Activated T-helper 1 cell treated with anti-CD3 and anti-CD28 coated beads, Interleukin-12 subunit alpha, Interleukin-12 subunit beta, Interleukin-2, Interleukin-4 antibody, amounts not matched to agents 30 ng/mL and 10 ng/mL and 1 ng/mL, durations not matched to agents 14 hours and 24 hours and 36 hours (primary cell): ENCODE measurements at regions of chr3 and their contacts with region 1.

Region 1: GRCh38 chr3:46098319-46098761 is 71.1 kb upstream of the XCR1 start:
- DNase-seq: peak; percentile 70
- H3K4me3 Mint-ChIP-seq: peak overlapping the region; percentile 71
- H3K27ac Mint-ChIP-seq: peak overlapping the region; percentile 95
- H3K4me1 Mint-ChIP-seq: peaks cover 75% of the 10 kb centered on the region
- H3K27me3 Mint-ChIP-seq: peaks cover 5% of the 10 kb centered on the region

Region 2: GRCh38 chr3:46027736-46028397 is 70.5 kb before region 1 on chr3:
- intact Hi-C with region 1: no loop called
- DNase-seq: no peak
- H3K4me3 Mint-ChIP-seq: no peak overlapping the region
- H3K27ac Mint-ChIP-seq: no peak overlapping the region
- H3K4me1 Mint-ChIP-seq: no peaks in the 10 kb centered on the region
- H3K27me3 Mint-ChIP-seq: peaks cover 16% of the 10 kb centered on the region

Region 3: DNA sequence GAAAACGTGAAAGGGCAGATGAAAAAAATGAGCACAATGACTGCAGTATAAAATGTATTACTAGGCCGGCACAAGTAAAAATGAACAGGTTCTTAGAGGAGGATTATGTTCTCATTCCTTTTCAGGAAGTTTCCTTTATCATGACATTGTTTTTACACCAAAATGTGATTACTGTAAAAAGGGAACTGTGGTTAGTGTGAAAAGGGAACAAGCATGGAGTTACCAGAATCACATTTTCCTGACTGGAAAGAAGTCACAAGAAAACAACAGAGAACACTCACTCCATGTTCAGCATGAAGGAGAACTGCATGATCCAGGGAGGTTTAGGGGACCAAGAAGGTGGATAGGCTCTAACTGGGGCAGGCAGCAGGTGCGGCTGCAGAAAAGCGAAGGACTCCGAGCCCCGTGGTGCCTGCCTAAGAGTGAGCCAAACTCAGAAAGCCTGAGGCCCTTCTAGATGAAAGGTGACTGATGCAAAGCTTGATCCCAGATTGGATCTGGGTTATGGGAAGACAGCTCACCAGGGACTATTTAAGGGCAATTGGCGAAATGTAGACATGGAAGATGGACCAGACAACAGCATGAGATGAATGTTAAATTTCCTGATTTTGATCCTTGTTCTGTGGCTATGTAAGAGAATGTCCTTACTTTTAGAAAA is 32.4 kb after region 1 on chr3:
- intact Hi-C with region 1: loop called (anchors 2 kb)
- DNase-seq: no peak
- H3K4me3 Mint-ChIP-seq: no peak overlapping the region
- H3K27ac Mint-ChIP-seq: no peak overlapping the region
- H3K4me1 Mint-ChIP-seq: peaks cover 61% of the 10 kb centered on the region
- H3K27me3 Mint-ChIP-seq: peaks cover 3% of the 10 kb centered on the region

Region 4: DNA sequence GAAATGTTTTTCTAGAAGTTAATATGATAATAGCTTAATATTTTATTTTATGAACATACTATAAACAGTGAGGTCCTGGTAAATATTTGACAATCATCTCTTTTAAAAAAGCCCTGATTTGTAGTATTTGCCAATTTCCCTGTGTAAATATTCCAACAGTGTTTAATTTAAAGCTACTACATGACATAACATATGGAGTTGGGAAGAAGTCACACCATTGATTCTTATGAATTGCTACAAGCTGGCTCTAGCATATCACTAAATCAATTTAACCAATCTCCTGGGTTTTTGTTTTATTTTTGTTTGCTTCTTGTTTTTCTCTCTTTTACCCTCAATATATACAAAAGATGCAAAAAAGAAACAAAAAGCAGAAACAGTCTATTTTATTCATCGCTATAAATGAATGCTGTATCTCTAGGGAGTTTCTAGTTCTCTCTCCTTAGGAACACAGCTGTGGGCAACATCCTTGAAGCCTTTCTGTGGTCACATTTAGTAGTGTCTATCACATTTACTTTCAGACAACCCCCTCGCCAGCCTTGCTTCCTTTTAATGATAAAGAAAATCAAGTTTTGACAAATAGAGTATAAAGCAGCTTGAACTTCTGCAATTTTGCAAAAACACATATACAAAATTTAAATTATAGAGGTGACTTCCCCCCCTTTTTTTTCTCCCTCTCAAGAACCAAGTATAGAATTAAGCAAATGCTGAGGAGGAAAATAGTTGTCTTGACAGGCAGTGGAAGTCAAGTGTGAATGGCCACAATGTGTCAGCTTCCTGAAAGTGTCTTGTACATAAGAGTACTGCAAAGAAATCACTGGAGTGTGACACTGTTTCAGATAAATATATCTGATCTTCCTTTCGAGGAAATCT is 88.4 kb after region 1 on chr3:
- intact Hi-C with region 1: loop called (anchors 2 kb)
- DNase-seq: no peak
- H3K4me3 Mint-ChIP-seq: no peak overlapping the region
- H3K27ac Mint-ChIP-seq: peak overlapping the region; percentile 2
- H3K4me1 Mint-ChIP-seq: peaks cover 42% of the 10 kb centered on the region
- H3K27me3 Mint-ChIP-seq: peaks cover 7% of the 10 kb centered on the region

Region 5: GRCh38 chr3:46208167-46208704 is 109.9 kb after region 1 on chr3 and contains the start of gene CCR1:
- intact Hi-C with region 1: loop called (anchors 1 kb)
- DNase-seq: peak; percentile 58
- H3K4me3 Mint-ChIP-seq: peak within 1 kb of the TSS; percentile 78
- H3K27ac Mint-ChIP-seq: peak within 1 kb of the TSS; percentile 91
- H3K4me1 Mint-ChIP-seq: peaks cover 70% of the 10 kb centered on the region
- H3K27me3 Mint-ChIP-seq: no peaks in the 10 kb centered on the region
- total RNA-seq, gene CCR1: 22.6 and 23.2 TPM in 2 replicates

Region 6: GRCh38 chr3:46269556-46269955 is 171.2 kb after region 1 on chr3:
- intact Hi-C with region 1: loop called (anchors 1 kb)
- DNase-seq: peak; percentile 16
- H3K4me3 Mint-ChIP-seq: peak overlapping the region; percentile 12
- H3K27ac Mint-ChIP-seq: peak overlapping the region; percentile 63
- H3K4me1 Mint-ChIP-seq: peaks cover 70% of the 10 kb centered on the region
- H3K27me3 Mint-ChIP-seq: peaks cover 16% of the 10 kb centered on the region

Region 7: GRCh38 chr3:46276502-46277099 is 178.3 kb after region 1 on chr3:
- intact Hi-C with region 1: loop called (anchors 1 kb)
- DNase-seq: peak; percentile 68
- H3K4me3 Mint-ChIP-seq: no peak overlapping the region
- H3K27ac Mint-ChIP-seq: peak overlapping the region; percentile 21
- H3K4me1 Mint-ChIP-seq: peaks cover 62% of the 10 kb centered on the region
- H3K27me3 Mint-ChIP-seq: peaks cover 11% of the 10 kb centered on the region

Region 8: DNA sequence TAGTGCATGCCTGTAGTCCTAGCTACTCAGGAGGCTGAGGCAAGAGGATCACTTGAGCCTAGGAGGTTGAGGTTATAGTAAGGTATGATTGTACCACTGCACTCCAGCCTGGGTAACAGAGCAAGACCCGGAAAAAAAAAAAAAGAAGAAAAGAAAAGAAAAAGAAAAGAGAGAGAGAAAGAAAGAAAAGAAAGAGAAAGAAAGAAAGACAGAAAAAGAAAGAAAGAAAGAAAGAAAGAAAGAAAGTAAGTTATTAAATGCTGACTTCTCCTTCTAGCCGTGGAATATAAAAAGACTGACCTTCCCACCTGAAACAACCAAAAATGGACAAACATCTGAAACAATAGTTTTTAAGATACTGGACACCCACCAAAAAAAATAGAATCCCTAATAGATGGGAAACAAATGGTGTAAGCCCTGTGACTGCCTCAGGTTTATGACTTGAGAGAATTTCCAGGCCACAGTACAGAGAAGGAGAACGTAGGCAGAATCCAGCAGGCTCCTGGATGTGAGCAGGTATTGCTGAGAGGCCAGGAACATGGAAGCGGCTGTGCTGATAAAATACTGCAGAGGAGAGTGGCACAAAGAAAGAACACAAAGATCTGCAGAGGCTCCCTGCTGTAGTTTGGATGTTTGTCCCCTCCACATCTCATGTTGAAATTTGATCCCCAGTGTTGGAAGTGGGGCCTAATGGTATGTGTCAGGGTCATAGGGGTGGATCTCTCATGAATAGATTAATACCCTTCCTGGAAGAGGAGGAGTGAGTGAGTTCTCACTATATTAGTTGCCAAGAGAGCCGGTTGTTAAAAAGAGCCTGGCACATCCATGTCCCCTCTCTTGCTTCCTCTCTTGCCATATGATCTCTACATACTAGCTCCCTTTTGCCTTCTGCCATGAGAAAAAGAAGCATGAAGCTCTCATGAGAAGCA is 661.2 kb after region 1 on chr3:
- intact Hi-C with region 1: no loop called
- DNase-seq: no peak
- H3K4me3 Mint-ChIP-seq: no peak overlapping the region
- H3K27ac Mint-ChIP-seq: no peak overlapping the region
- H3K4me1 Mint-ChIP-seq: no peaks in the 10 kb centered on the region
- H3K27me3 Mint-ChIP-seq: peaks cover 15% of the 10 kb centered on the region